ENCODE measurements at regions of chr14 and their contacts with region 1.

Region 1: GRCh38 chr14:99572173-99573002 is 31.6 kb downstream of the CCDC85C start:
- DNase-seq: peak; percentile 82 to 93 (median 84)
- ATAC-seq: peak; percentile 84
- H3K4me3 ChIP-seq: no peak overlapping the region
- H3K27ac ChIP-seq: no peak overlapping the region
- H3K4me1 ChIP-seq: peaks cover 26 to 85% of the 10 kb centered on the region in 2 experiments
- H3K27me3 ChIP-seq: no peaks in the 10 kb centered on the region
- CTCF ChIP-seq: no peak; a peak in 1 of 6 replicates
- EP300 ChIP-seq: peak; percentile 82
- POLR2A ChIP-seq: no peak
- RAD21 ChIP-seq: peak in 1 of 2 experiments; percentile 12; a peak in 1 of 4 replicates

Region 2: DNA sequence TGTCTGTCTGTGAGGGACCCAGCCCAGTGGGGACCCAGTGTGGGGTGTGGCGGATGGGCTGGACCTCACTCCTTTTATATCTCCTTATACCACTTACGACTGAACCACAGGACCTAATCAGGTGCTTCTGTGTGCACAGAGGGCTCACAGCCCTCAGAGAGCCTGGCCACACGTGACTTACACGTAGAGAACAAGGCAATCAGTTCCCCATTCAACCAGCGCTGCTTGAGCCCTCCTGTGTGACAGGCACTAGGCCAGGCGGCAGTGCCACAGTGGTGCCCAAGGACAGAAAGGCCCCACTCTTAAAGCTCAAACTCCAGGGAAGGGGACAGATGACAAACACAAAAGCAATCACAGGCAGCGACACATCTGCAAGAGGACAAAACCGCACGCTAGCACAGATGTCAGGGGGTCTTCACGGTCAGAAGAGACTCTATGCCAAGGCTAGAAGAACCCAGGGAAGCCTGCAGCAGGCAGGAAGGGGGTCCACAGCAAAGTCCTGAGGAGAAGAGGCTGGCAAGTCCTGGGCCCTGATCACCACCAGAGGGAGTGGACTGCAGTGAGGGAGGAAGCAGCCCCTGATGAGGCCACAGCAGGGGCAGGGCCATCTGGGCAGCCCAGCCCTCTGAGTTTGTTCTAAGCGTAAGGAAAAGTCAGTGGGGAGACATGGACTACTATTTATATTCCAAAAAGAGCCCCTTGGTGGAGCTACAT is 131.1 kb before region 1 on chr14:
- CTCF ChIA-PET with region 1: no interaction called
- POLR2A ChIA-PET with region 1: no interaction called
- in situ Hi-C with region 1: no loop called
- intact Hi-C with region 1: no loop called
- DNase-seq: no peak
- ATAC-seq: peak; percentile 69
- H3K4me3 ChIP-seq: no peak overlapping the region
- H3K27ac ChIP-seq: no peak overlapping the region
- H3K4me1 ChIP-seq: no peaks in the 10 kb centered on the region
- H3K27me3 ChIP-seq: no peaks in the 10 kb centered on the region
- CTCF ChIP-seq: no peak
- EP300 ChIP-seq: no peak
- POLR2A ChIP-seq: no peak
- RAD21 ChIP-seq: no peak

Region 3: GRCh38 chr14:99605299-99605961 is 33.0 kb after region 1 on chr14:
- CTCF ChIA-PET with region 1: no interaction called
- POLR2A ChIA-PET with region 1: interaction called, 4 read pairs
- in situ Hi-C with region 1: no loop called
- intact Hi-C with region 1: loop called (anchors 1 kb)
- DNase-seq: peak; percentile 76 to 82 (median 78)
- ATAC-seq: peak; percentile 43
- H3K4me3 ChIP-seq: peak overlapping the region; percentile 73
- H3K27ac ChIP-seq: peak overlapping the region; percentile 84
- H3K4me1 ChIP-seq: peaks cover 37 to 48% of the 10 kb centered on the region in 2 experiments
- H3K27me3 ChIP-seq: no peaks in the 10 kb centered on the region
- CTCF ChIP-seq: no peak
- EP300 ChIP-seq: no peak
- POLR2A ChIP-seq: no peak
- RAD21 ChIP-seq: no peak

Measured in K562 (cell line).